ENCODE measurements at regions of chr5 and their contacts with region 1.

Region 1: DNA sequence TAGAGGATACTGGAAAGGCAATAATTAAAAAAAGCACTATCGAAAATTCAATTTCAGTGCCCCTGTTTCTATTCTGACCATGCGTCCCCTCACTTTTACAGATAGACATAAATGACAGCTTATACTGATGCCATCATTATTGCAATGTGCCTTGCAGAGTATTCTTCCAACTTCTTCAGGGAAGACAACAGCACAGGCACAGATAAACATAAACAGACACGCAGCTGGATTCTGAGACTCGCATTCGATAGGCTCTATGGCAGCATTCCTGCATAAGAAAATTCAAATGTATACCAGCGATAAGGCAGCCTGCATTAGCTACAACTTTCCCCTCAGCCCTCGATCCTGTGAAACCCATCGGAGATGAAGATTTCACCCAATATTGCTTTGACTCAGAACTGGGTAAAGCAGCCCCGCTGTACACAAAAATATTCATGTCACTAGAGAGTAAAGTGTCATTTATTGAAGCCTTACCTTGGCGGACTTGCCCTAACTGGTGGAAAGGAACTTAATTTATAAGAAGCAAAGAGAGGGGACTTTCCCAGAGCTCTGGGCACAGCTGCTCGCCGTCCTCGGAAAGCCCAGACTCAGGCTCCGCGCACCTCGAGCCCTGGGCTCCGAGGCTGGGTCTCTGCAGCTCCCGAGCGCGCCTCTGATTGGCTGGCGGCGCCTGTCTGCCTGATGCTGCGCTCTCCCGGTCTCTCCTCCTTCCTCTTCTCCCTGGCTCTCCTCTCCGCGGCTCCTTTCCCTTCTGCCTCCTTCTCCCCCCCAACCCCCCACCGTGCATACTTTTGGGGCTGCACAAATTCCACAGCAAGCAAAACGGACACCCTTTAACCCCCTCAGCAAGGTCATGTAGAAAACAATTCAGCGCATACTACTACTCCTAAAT is at the start of gene CDH18:
- DNase-seq: peak; percentile 79
- H3K4me3 ChIP-seq: peak within 1 kb of the TSS; percentile 40 to 52 (median 48)
- H3K27ac ChIP-seq: no peak within 1 kb of the TSS
- H3K4me1 ChIP-seq: peaks cover 7% of the 10 kb centered on the region
- H3K27me3 ChIP-seq: no peaks in the 10 kb centered on the region
- CTCF ChIP-seq: no peak
- total RNA-seq, gene CDH18: 0.52 TPM in 1 of 2 donors, not detected in the other

Region 2: GRCh38 chr5:19795218-19795617 is 192.6 kb before region 1 on chr5:
- CTCF ChIA-PET with region 1: no interaction called
- dilution Hi-C with region 1: no loop called
- in situ Hi-C with region 1: no loop called
- intact Hi-C with region 1: loop called (anchors 10 kb)
- DNase-seq: peak; percentile 34
- H3K4me3 ChIP-seq: no peak overlapping the region
- H3K27ac ChIP-seq: no peak overlapping the region
- H3K4me1 ChIP-seq: no peaks in the 10 kb centered on the region
- H3K27me3 ChIP-seq: no peaks in the 10 kb centered on the region
- CTCF ChIP-seq: peak; percentile 50 to 64

Region 3: GRCh38 chr5:19866090-19866450 is 121.8 kb before region 1 on chr5:
- CTCF ChIA-PET with region 1: no interaction called
- dilution Hi-C with region 1: no loop called
- in situ Hi-C with region 1: no loop called
- intact Hi-C with region 1: loop called (anchors 5 kb)
- DNase-seq: peak; percentile 50
- H3K4me3 ChIP-seq: peak overlapping the region; percentile 21 to 35 (median 24)
- H3K27ac ChIP-seq: peak overlapping the region; percentile 49
- H3K4me1 ChIP-seq: peaks cover 6% of the 10 kb centered on the region
- H3K27me3 ChIP-seq: no peaks in the 10 kb centered on the region
- CTCF ChIP-seq: no peak

Region 4: GRCh38 chr5:19960478-19960877 is 27.4 kb before region 1 on chr5:
- CTCF ChIA-PET with region 1: no interaction called
- dilution Hi-C with region 1: no loop called
- in situ Hi-C with region 1: no loop called
- intact Hi-C with region 1: no loop called
- DNase-seq: no peak
- H3K4me3 ChIP-seq: no peak overlapping the region
- H3K27ac ChIP-seq: no peak overlapping the region
- H3K4me1 ChIP-seq: no peaks in the 10 kb centered on the region
- H3K27me3 ChIP-seq: no peaks in the 10 kb centered on the region
- CTCF ChIP-seq: no peak

Region 5: GRCh38 chr5:20254748-20255147 is 266.9 kb after region 1 on chr5:
- CTCF ChIA-PET with region 1: no interaction called
- dilution Hi-C with region 1: no loop called
- in situ Hi-C with region 1: no loop called
- intact Hi-C with region 1: no loop called
- DNase-seq: no peak
- H3K4me3 ChIP-seq: no peak overlapping the region
- H3K27ac ChIP-seq: no peak overlapping the region
- H3K4me1 ChIP-seq: no peaks in the 10 kb centered on the region
- H3K27me3 ChIP-seq: no peaks in the 10 kb centered on the region
- CTCF ChIP-seq: no peak